Activated naive CD4-positive, alpha-beta T cell treated with anti-CD3 and anti-CD28 coated beads, Interleukin-2, amount 10 ng/mL, durations not matched to agents 7 days and 5 days (primary cell): ENCODE measurements at regions of chr14 and their contacts with region 1.

Region 1: DNA sequence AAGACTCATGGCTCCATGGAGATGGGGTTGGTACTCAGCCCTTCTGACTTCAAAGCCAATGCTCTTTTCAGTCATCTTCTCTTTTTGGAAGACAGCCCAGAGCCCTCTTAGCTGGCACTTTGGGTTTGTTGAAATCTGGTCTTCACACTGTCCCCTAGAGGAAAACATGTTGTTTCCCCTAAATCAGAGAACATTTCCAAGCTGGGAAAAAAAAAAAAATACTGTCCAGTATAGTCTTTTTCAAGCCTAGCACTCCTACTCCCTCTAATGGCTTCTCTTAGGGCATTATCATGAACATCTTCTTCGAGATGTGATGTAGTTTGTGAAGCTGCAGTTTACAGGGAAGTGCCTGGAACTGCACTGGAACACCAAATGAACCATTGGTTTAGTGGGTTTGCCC is 3.0 kb upstream of the ZC3H14 start:
- DNase-seq: no peak
- H3K4me3 Mint-ChIP-seq: no peak overlapping the region
- H3K27ac Mint-ChIP-seq: no peak overlapping the region
- H3K4me1 Mint-ChIP-seq: peaks cover 55% of the 10 kb centered on the region
- H3K27me3 Mint-ChIP-seq: peaks cover 71% of the 10 kb centered on the region

Region 2: GRCh38 chr14:88492272-88493089 is 67.4 kb before region 1 on chr14:
- CTCF ChIA-PET with region 1: interaction called, 15 read pairs
- DNase-seq: peak; percentile 76
- H3K4me3 Mint-ChIP-seq: no peak overlapping the region
- H3K27ac Mint-ChIP-seq: no peak overlapping the region
- H3K4me1 Mint-ChIP-seq: no peaks in the 10 kb centered on the region
- H3K27me3 Mint-ChIP-seq: peaks cover 9% of the 10 kb centered on the region